Astrocyte of the cerebellum (primary cell): ENCODE measurements at regions of chr17 and their contacts with region 1.

Region 1: GRCh38 chr17:30234964-30235363 is 533 bp downstream of the SLC6A4 start:
- DNase-seq: no peak
- H3K4me3 ChIP-seq: peak overlapping the region; percentile 39
- CTCF ChIP-seq: no peak

Region 2: DNA sequence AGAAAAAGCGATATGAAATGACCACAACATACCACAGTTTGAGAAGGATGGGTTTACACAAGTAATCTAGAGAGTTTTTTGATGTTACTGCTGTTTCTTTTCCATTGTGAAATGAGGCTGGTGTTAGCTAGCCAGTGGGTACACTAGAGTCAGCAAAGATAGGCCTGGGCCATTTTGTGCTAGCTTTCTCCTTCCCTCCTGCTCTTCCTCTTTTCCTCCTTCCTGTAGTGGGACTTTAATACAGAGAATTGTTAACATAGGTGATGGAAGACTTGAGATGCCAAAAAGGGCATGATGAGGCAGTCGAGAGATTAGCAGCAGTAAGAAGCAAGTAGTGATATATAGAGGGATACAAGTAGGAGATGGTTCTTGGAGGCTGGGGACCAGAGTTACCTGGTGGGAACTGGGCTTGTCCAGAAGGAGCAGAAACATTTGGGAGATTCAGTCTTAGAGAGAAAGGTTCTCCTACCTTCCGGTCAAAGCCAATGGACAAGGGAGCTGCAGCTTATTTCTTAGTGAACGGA is 110.6 kb before region 1 on chr17:
- in situ Hi-C with region 1: no loop called
- DNase-seq: no peak
- H3K4me3 ChIP-seq: no peak overlapping the region
- CTCF ChIP-seq: no peak

Region 3: DNA sequence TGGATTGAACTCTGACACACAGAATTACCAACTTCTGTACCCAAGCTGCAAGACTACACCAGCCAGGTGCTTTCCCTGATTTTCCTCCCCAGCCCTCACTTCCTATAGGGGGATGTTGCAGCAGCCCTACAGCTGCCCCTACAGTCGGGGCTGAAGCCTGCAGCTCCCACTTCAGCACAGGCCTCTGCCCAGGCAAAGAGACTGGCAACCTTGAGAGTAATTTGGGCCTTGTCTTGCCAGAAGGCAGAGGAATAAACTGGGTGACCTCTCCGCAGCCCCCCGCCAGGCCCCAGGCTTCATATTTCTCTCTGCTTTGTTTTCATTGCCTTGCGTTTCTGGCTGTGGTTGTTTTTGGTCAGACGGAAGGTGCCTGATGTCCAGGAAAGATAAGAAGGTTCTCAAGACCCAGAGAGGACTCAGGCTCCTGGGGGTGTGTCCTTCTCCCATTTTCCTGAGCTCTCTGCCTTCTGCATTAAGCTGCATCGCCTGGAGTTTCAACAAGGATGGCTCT is 31.4 kb before region 1 on chr17:
- in situ Hi-C with region 1: no loop called
- DNase-seq: no peak
- H3K4me3 ChIP-seq: no peak overlapping the region
- CTCF ChIP-seq: no peak

Region 4: DNA sequence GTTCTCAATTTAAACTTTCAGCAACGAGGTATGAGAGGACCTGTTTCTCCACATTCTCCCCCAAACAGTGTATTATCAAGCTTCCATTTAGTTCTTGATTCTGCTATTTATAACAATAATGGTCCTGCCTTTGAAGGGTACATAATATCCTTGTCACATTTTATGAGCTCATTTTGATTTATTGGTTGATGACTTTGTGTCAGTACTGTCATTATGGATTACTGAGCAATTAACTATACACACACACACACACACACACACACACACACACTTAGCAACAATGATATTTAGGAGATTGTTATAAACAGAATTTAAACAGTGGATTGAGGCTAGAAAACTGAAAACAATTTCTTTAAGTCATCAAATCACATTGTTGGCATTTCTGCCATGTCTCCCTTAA is 91.8 kb after region 1 on chr17:
- in situ Hi-C with region 1: loop called (anchors 5 kb)
- DNase-seq: no peak
- H3K4me3 ChIP-seq: no peak overlapping the region
- CTCF ChIP-seq: no peak